CD4-positive, alpha-beta memory T cell (primary cell): ENCODE measurements at regions of chr4 and their contacts with region 1.

Region 1: GRCh38 chr4:114694770-114695169 is 96.2 kb downstream of the UGT8 start:
- DNase-seq: peak in 4 of 5 donors; percentile 6 to 19 (median 12)
- H3K4me3 ChIP-seq: no peak overlapping the region
- H3K4me3 Mint-ChIP-seq: no peak overlapping the region
- H3K27ac ChIP-seq: no peak overlapping the region
- H3K27ac Mint-ChIP-seq: no peak overlapping the region
- H3K4me1 ChIP-seq: no peaks in the 10 kb centered on the region
- H3K4me1 Mint-ChIP-seq: no peaks in the 10 kb centered on the region
- H3K27me3 ChIP-seq: peaks cover 3% of the 10 kb centered on the region
- H3K27me3 Mint-ChIP-seq: peaks cover 3 to 4% of the 10 kb centered on the region in 2 donors

Region 2: GRCh38 chr4:113278324-113278934 is 1416.3 kb before region 1 on chr4:
- CTCF ChIA-PET with region 1: no interaction called
- POLR2A ChIA-PET with region 1: no interaction called
- intact Hi-C with region 1: loop called (anchors 10 kb)
- DNase-seq: peak in 4 of 5 donors; percentile 24 to 35 (median 33)
- H3K4me3 ChIP-seq: no peak overlapping the region
- H3K4me3 Mint-ChIP-seq: no peak overlapping the region
- H3K27ac ChIP-seq: no peak overlapping the region
- H3K27ac Mint-ChIP-seq: no peak overlapping the region
- H3K4me1 ChIP-seq: no peaks in the 10 kb centered on the region
- H3K4me1 Mint-ChIP-seq: no peaks in the 10 kb centered on the region
- H3K27me3 ChIP-seq: no peaks in the 10 kb centered on the region
- H3K27me3 Mint-ChIP-seq: peaks cover 3 to 11% of the 10 kb centered on the region in 2 donors

Region 3: DNA sequence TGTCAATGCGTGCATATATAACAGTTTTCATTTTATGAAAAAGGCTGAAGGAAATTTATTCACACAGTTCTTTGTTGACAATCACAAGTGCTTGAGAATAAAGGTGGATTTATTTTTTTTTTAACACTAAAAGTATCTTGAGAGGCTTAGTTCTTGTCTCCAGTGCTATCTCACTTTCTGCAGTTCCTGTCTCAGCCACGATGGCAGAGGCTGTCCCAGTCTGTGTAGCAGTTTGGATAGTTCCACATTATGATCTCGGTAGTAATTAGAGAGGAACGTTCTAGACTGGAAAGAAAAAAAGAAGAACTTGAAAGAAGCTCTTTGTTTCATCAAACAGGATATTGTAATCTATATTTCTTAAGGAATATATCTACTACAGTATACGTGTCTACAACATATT is 132.9 kb after region 1 on chr4:
- CTCF ChIA-PET with region 1: no interaction called
- POLR2A ChIA-PET with region 1: no interaction called
- intact Hi-C with region 1: no loop called
- DNase-seq: no peak
- H3K4me3 ChIP-seq: no peak overlapping the region
- H3K4me3 Mint-ChIP-seq: no peak overlapping the region
- H3K27ac ChIP-seq: no peak overlapping the region
- H3K27ac Mint-ChIP-seq: no peak overlapping the region
- H3K4me1 ChIP-seq: no peaks in the 10 kb centered on the region
- H3K4me1 Mint-ChIP-seq: no peaks in the 10 kb centered on the region
- H3K27me3 ChIP-seq: no peaks in the 10 kb centered on the region
- H3K27me3 Mint-ChIP-seq: peaks cover 0 to 4% of the 10 kb centered on the region in 2 donors